CD4-positive, alpha-beta T cell (primary cell): ENCODE measurements at regions of chr12 and their contacts with region 1.

Region 1: DNA sequence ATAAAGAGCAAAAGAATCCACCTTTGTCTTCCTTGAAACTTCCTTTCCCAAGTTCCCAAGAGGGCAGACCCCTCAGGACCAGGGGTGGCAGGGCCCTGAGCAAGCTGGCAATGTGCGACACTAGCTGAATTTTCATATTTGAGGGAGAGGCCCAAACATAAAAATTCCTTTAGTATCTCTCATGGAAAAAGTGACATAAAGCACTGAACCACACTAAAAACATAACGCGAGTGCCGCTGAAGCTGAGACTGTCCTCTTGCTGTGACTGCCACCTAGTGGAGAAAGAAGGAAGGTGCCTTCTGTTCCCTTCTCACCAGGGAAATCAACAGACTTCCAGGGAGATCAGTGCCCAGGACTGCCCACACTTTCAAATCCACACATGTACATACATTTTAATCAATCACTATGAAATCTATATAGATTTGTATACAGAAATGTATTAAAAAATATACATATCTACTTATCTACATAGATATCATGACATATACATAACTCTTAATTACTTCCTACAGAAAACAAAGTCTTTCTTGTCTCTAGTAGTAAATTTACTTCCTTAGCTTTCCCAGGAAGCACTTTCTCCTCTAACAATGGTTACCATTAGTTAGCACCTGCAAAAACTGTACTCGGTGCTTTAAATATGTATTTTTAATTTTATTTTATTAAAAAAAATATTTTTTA is 53.8 kb downstream of the SSH1 start:
- DNase-seq: peak; percentile 39 to 87 (median 58)
- ATAC-seq: peak; percentile 96
- H3K4me3 ChIP-seq: no peak overlapping the region
- H3K4me3 Mint-ChIP-seq: no peak overlapping the region
- H3K27ac ChIP-seq: no peak overlapping the region
- H3K27ac Mint-ChIP-seq: no peak overlapping the region
- H3K4me1 ChIP-seq: peaks cover 4% of the 10 kb centered on the region
- H3K4me1 Mint-ChIP-seq: peaks cover 4% of the 10 kb centered on the region
- H3K27me3 ChIP-seq: no peaks in the 10 kb centered on the region
- H3K27me3 Mint-ChIP-seq: no peaks in the 10 kb centered on the region
- CTCF ChIP-seq: peak; percentile 94

Region 2: GRCh38 chr12:108502922-108503321 is 300.6 kb before region 1 on chr12:
- CTCF ChIA-PET with region 1: no interaction called
- POLR2A ChIA-PET with region 1: no interaction called
- intact Hi-C with region 1: no loop called
- DNase-seq: no peak
- ATAC-seq: no peak
- H3K4me3 ChIP-seq: no peak overlapping the region
- H3K4me3 Mint-ChIP-seq: no peak overlapping the region
- H3K27ac ChIP-seq: no peak overlapping the region
- H3K27ac Mint-ChIP-seq: no peak overlapping the region
- H3K4me1 ChIP-seq: no peaks in the 10 kb centered on the region
- H3K4me1 Mint-ChIP-seq: no peaks in the 10 kb centered on the region
- H3K27me3 ChIP-seq: peaks cover 0 to 19% of the 10 kb centered on the region in 2 experiments
- H3K27me3 Mint-ChIP-seq: peaks cover 39% of the 10 kb centered on the region
- CTCF ChIP-seq: no peak

Region 3: GRCh38 chr12:108570743-108571608 is 232.6 kb before region 1 on chr12:
- CTCF ChIA-PET with region 1: interaction called, 10 read pairs
- POLR2A ChIA-PET with region 1: no interaction called
- intact Hi-C with region 1: loop called in 1 of 2 experiments (anchors 1 kb)
- DNase-seq: peak in 2 of 14 experiments; percentile 47 to 48
- ATAC-seq: no peak
- H3K4me3 ChIP-seq: no peak overlapping the region
- H3K4me3 Mint-ChIP-seq: peak overlapping the region; percentile 11
- H3K27ac ChIP-seq: peak overlapping the region; percentile 29 to 33
- H3K27ac Mint-ChIP-seq: peak overlapping the region; percentile 90
- H3K4me1 ChIP-seq: peaks cover 59% of the 10 kb centered on the region
- H3K4me1 Mint-ChIP-seq: peaks cover 93% of the 10 kb centered on the region
- H3K27me3 ChIP-seq: no peaks in the 10 kb centered on the region
- H3K27me3 Mint-ChIP-seq: no peaks in the 10 kb centered on the region
- CTCF ChIP-seq: no peak

Region 4: DNA sequence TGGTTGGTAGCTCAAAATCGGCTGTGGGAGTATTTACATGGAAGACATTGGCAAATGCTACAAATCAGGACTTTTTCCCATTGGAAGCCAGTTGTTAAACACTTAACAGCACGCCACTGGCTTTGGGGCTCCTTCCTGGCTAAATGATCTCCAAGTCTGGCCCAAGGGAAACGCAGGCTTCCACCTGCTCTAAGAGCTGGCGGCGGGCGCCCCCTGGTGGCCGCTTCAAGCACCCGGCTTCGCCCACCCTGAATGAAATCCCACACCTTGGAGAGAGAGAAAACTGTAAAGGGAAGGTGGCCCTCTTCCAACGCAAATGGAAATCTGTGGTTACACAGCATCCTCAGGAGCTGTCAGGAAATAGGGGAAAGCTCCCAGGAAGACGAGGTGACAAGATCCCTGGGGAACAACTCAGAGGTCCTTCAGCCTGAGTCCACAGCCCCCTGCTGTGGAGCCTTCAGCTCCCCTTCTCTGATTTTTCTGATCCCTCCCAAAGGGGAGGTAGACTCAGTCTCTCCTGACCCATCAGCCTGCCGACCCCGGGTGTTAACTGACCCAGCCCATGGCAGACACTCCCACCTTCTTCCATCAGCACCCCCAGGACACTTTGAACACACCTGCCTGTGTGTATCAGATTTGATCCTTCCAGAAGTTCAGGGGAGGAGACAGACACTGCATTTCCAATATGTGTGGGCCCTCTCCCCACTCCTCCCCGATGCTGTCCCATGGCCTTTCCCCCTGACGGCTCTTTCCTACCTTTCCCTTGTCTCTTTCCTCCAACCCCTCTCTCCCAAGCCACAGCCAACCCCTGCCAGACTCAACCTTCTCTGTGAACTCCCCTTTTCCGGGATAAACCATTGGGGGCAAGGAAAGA is 185.3 kb before region 1 on chr12:
- CTCF ChIA-PET with region 1: interaction called, 35 read pairs
- POLR2A ChIA-PET with region 1: interaction called, 3 read pairs
- intact Hi-C with region 1: loop called (anchors 1 to 2 kb)
- DNase-seq: peak; percentile 61 to 89 (median 72)
- ATAC-seq: peak; percentile 54
- H3K4me3 ChIP-seq: no peak overlapping the region
- H3K4me3 Mint-ChIP-seq: peak overlapping the region; percentile 30
- H3K27ac ChIP-seq: peak overlapping the region; percentile 49 to 80
- H3K27ac Mint-ChIP-seq: peak overlapping the region; percentile 84
- H3K4me1 ChIP-seq: peaks cover 63% of the 10 kb centered on the region
- H3K4me1 Mint-ChIP-seq: peaks cover 59% of the 10 kb centered on the region
- H3K27me3 ChIP-seq: no peaks in the 10 kb centered on the region
- H3K27me3 Mint-ChIP-seq: no peaks in the 10 kb centered on the region
- CTCF ChIP-seq: peak; percentile 98

Region 5: DNA sequence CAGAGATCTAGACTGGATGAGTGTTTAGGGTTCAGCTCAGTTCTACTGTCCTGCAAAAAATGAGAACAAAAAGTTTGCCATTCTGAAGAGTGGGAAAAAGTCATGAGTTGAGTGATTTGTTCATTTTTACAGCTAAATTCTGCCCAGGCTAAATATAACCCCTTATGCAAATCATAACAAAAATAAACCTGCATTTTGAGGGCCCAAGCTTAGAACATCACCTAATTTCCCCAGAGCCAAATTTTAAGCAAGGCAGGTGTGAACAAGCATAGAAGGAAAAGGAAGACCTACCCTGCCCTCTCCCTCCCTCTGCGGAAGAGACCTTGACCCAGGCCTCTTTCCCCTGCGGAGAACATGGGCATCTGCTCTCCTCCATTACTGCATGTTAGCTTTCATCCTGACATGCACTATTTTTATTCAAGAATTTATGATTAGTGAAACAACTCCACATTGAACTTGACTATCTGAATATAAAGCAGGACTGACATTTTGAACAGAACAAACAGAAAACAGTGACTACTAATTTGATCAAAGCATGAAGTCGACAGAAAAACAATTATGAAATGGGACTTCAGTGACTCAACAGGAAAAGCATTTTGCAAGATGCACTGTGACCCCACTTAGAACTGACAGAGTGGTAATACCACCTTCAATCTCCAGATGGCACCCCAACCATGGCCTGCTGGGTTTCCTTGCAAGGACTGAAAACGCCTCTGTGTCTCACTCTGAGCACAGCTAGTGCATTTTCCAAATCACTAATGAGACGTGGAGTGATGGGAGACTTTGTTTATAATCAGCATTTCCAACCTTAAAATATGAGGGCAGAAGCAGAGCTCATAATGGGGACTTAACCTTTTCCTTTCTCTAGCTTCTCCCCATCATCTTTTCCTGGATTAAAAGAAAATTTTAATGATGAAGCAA is 139.0 kb before region 1 on chr12:
- CTCF ChIA-PET with region 1: interaction called, 129 read pairs
- POLR2A ChIA-PET with region 1: interaction called, 15 read pairs
- intact Hi-C with region 1: loop called (anchors 1 kb)
- DNase-seq: peak; percentile 69 to 90 (median 79)
- ATAC-seq: peak; percentile 100
- H3K4me3 ChIP-seq: no peak overlapping the region
- H3K4me3 Mint-ChIP-seq: no peak overlapping the region
- H3K27ac ChIP-seq: no peak overlapping the region
- H3K27ac Mint-ChIP-seq: peak overlapping the region; percentile 72
- H3K4me1 ChIP-seq: peaks cover 6% of the 10 kb centered on the region
- H3K4me1 Mint-ChIP-seq: peaks cover 7% of the 10 kb centered on the region
- H3K27me3 ChIP-seq: no peaks in the 10 kb centered on the region
- H3K27me3 Mint-ChIP-seq: no peaks in the 10 kb centered on the region
- CTCF ChIP-seq: peak; percentile 91

Region 6: GRCh38 chr12:108691175-108691997 is 112.2 kb before region 1 on chr12:
- CTCF ChIA-PET with region 1: interaction called, 10 read pairs
- POLR2A ChIA-PET with region 1: no interaction called
- intact Hi-C with region 1: no loop called
- DNase-seq: peak; percentile 17 to 87 (median 58)
- ATAC-seq: peak; percentile 74
- H3K4me3 ChIP-seq: peak overlapping the region; percentile 32
- H3K4me3 Mint-ChIP-seq: peak overlapping the region; percentile 70
- H3K27ac ChIP-seq: peak overlapping the region in 1 of 2 donors; percentile 50
- H3K27ac Mint-ChIP-seq: peak overlapping the region; percentile 77
- H3K4me1 ChIP-seq: peaks cover 41% of the 10 kb centered on the region
- H3K4me1 Mint-ChIP-seq: peaks cover 58% of the 10 kb centered on the region
- H3K27me3 ChIP-seq: no peaks in the 10 kb centered on the region
- H3K27me3 Mint-ChIP-seq: no peaks in the 10 kb centered on the region
- CTCF ChIP-seq: no peak

Region 7: DNA sequence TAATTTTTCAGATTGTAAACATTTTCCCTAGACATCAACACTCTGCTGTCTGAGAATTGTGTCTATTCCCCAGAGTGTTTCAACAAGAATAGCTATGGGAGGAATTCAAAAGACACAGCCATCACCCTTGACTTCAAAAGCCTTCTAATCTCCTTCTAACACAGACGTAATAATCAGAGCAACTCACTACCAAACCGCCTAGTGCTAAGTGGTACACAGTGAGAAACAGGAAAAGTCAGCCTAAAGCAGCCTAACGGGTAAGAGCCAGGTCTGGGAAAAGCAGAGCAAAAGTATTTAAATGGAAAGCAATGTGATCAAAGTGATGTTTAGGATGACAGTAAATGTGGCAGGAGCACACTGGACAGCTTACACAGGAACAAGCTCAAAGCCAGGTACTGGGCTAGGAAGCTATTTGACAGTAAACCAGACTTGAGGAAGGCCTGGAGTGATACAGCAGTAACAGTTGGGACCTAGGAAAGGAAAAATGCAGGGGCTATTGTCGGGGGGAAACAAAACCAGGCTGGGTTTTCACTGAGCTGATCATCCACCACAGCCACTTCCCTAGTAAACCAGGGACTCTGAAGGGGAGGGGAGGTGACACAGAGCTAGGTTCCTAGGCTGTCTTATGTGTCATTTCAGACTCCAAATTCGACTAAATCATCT is 101.7 kb before region 1 on chr12:
- CTCF ChIA-PET with region 1: no interaction called
- POLR2A ChIA-PET with region 1: no interaction called
- intact Hi-C with region 1: no loop called
- DNase-seq: peak in 1 of 14 experiments; percentile 26
- ATAC-seq: peak; percentile 26
- H3K4me3 ChIP-seq: no peak overlapping the region
- H3K4me3 Mint-ChIP-seq: no peak overlapping the region
- H3K27ac ChIP-seq: no peak overlapping the region
- H3K27ac Mint-ChIP-seq: no peak overlapping the region
- H3K4me1 ChIP-seq: peaks cover 4% of the 10 kb centered on the region
- H3K4me1 Mint-ChIP-seq: peaks cover 10% of the 10 kb centered on the region
- H3K27me3 ChIP-seq: no peaks in the 10 kb centered on the region
- H3K27me3 Mint-ChIP-seq: no peaks in the 10 kb centered on the region
- CTCF ChIP-seq: no peak

Region 8: DNA sequence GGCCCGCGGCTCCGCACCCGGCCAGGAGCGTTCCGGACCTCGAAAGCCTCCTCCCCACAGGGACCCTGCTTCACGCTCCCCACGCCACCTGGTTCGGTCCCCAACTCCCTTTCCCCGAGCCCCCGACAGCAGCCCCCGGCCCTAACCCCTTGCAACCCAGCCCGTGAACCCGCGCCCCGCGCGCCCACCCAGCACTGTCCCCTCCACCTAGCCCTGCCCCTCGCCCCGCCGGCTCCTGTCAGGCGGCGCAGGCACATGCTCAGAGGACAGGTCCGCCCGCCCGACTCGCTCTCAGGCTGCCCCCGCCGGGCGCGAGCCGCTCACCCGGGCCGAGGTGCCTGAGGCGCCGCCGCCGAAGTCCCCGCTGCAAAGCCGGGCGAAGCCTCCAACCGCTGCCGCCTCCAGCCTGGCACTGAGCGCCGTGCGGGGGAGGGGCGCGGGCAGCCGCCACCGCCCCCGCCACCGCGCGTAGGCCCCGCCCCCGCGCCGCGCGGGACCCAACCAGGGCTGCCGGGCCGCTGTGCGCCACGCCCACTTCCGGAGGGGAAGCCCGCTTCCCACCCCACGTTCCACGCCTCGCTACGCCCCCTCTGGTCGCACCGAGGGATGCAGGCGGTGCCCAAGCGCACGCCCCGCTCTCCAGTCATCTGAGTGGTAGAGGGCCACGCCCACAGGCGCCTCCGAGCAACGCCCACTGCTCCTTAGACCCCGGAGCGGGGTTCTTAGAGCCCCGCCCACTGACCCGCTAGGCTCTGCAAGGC is 72.3 kb before region 1 on chr12 and contains the start of gene CORO1C:
- CTCF ChIA-PET with region 1: interaction called, 6 read pairs
- POLR2A ChIA-PET with region 1: no interaction called
- intact Hi-C with region 1: loop called (anchors 2 kb)
- DNase-seq: peak; percentile 88 to 99 (median 92)
- ATAC-seq: peak; percentile 73
- H3K4me3 ChIP-seq: peak within 1 kb of the TSS; percentile 93
- H3K4me3 Mint-ChIP-seq: peak within 1 kb of the TSS; percentile 97
- H3K27ac ChIP-seq: peak within 1 kb of the TSS; percentile 75 to 90
- H3K27ac Mint-ChIP-seq: peak within 1 kb of the TSS; percentile 88
- H3K4me1 ChIP-seq: peaks cover 26% of the 10 kb centered on the region
- H3K4me1 Mint-ChIP-seq: peaks cover 26% of the 10 kb centered on the region
- H3K27me3 ChIP-seq: no peaks in the 10 kb centered on the region
- H3K27me3 Mint-ChIP-seq: no peaks in the 10 kb centered on the region
- CTCF ChIP-seq: peak; percentile 75
- total RNA-seq, gene CORO1C: 6.7 to 7.4 TPM

Region 9: GRCh38 chr12:108950991-108951739 is 147.6 kb after region 1 on chr12:
- CTCF ChIA-PET with region 1: no interaction called
- POLR2A ChIA-PET with region 1: no interaction called
- intact Hi-C with region 1: loop called in 1 of 2 experiments (anchors 5 kb)
- DNase-seq: peak; percentile 47 to 86 (median 59)
- ATAC-seq: peak; percentile 95
- H3K4me3 ChIP-seq: no peak overlapping the region
- H3K4me3 Mint-ChIP-seq: no peak overlapping the region
- H3K27ac ChIP-seq: no peak overlapping the region
- H3K27ac Mint-ChIP-seq: no peak overlapping the region
- H3K4me1 ChIP-seq: peaks cover 4% of the 10 kb centered on the region
- H3K4me1 Mint-ChIP-seq: no peaks in the 10 kb centered on the region
- H3K27me3 ChIP-seq: peaks cover 0 to 3% of the 10 kb centered on the region in 2 experiments
- H3K27me3 Mint-ChIP-seq: peaks cover 24% of the 10 kb centered on the region
- CTCF ChIP-seq: peak; percentile 78